ENCODE measurements at regions of chr22 and their contacts with region 1.

Region 1: GRCh38 chr22:19178656-19179496 is at the start of gene SLC25A1:
- DNase-seq: peak; percentile 39
- ATAC-seq: peak; percentile 88
- H3K4me3 ChIP-seq: peak within 1 kb of the TSS; percentile 76
- H3K27ac ChIP-seq: peak within 1 kb of the TSS; percentile 74
- H3K4me1 ChIP-seq: peaks cover 22% of the 10 kb centered on the region
- H3K27me3 ChIP-seq: peaks cover 0 to 1% of the 10 kb centered on the region in 2 experiments; a peak in 1 of 4 replicates
- CTCF ChIP-seq: no peak
- EP300 ChIP-seq: no peak
- POLR2A ChIP-seq: peak; percentile 59
- RAD21 ChIP-seq: no peak
- polyA plus RNA-seq, gene SLC25A1: 2.3 to 7.8 TPM

Region 2: GRCh38 chr22:19043121-19044055 is 135.5 kb before region 1 on chr22:
- CTCF ChIA-PET with region 1: no interaction called
- POLR2A ChIA-PET with region 1: no interaction called
- RAD21 ChIA-PET with region 1: no interaction called
- SMC1A ChIA-PET with region 1: no interaction called
- in situ Hi-C with region 1: no loop called
- intact Hi-C with region 1: no loop called
- DNase-seq: no peak
- ATAC-seq: no peak
- H3K4me3 ChIP-seq: no peak overlapping the region
- H3K27ac ChIP-seq: no peak overlapping the region
- H3K4me1 ChIP-seq: no peaks in the 10 kb centered on the region
- H3K27me3 ChIP-seq: no peaks in the 10 kb centered on the region
- CTCF ChIP-seq: no peak
- EP300 ChIP-seq: no peak
- POLR2A ChIP-seq: no peak
- RAD21 ChIP-seq: no peak

Region 3: GRCh38 chr22:19115628-19116027 is 63.2 kb before region 1 on chr22:
- CTCF ChIA-PET with region 1: interaction called, 11 read pairs
- POLR2A ChIA-PET with region 1: interaction called, 3 read pairs
- RAD21 ChIA-PET with region 1: interaction called, 4 read pairs
- SMC1A ChIA-PET with region 1: interaction called, 3 read pairs
- in situ Hi-C with region 1: no loop called
- intact Hi-C with region 1: no loop called
- DNase-seq: no peak
- ATAC-seq: peak; percentile 75
- H3K4me3 ChIP-seq: no peak overlapping the region
- H3K27ac ChIP-seq: no peak overlapping the region
- H3K4me1 ChIP-seq: peaks cover 24% of the 10 kb centered on the region
- H3K27me3 ChIP-seq: no peaks in the 10 kb centered on the region
- CTCF ChIP-seq: peak; percentile 36 to 50 (median 46); a peak in 5 of 6 replicates
- EP300 ChIP-seq: no peak
- POLR2A ChIP-seq: no peak
- RAD21 ChIP-seq: no peak; the same call in 1 of the 2 replicates

Region 4: GRCh38 chr22:19291580-19292457 is 112.9 kb after region 1 on chr22 and contains the start of gene CLTCL1:
- CTCF ChIA-PET with region 1: interaction called, 10 read pairs
- POLR2A ChIA-PET with region 1: interaction called, 3 read pairs
- RAD21 ChIA-PET with region 1: interaction called, 3 read pairs
- SMC1A ChIA-PET with region 1: interaction called, 3 read pairs
- in situ Hi-C with region 1: loop called (anchors 5 kb)
- intact Hi-C with region 1: no loop called
- DNase-seq: peak; percentile 21
- ATAC-seq: peak; percentile 82
- H3K4me3 ChIP-seq: peak within 1 kb of the TSS; percentile 96
- H3K27ac ChIP-seq: peak within 1 kb of the TSS; percentile 34; the same call in 1 of the 2 replicates
- H3K4me1 ChIP-seq: peaks cover 9% of the 10 kb centered on the region
- H3K27me3 ChIP-seq: peaks cover 7 to 15% of the 10 kb centered on the region in 2 experiments
- CTCF ChIP-seq: no peak
- EP300 ChIP-seq: no peak
- POLR2A ChIP-seq: peak; percentile 58
- RAD21 ChIP-seq: no peak
- polyA plus RNA-seq, gene CLTCL1: 0.04 TPM in 1 of 2 experiments, not detected in the other

Region 5: GRCh38 chr22:19447388-19448075 is 268.7 kb after region 1 on chr22 and contains the start of gene C22orf39:
- CTCF ChIA-PET with region 1: interaction called, 7 read pairs
- POLR2A ChIA-PET with region 1: interaction called, 4 read pairs
- RAD21 ChIA-PET with region 1: interaction called, 4 read pairs
- SMC1A ChIA-PET with region 1: no interaction called
- in situ Hi-C with region 1: no loop called
- intact Hi-C with region 1: loop called (anchors 5 kb)
- DNase-seq: peak; percentile 67
- ATAC-seq: peak; percentile 92
- H3K4me3 ChIP-seq: peak within 1 kb of the TSS; percentile 95
- H3K27ac ChIP-seq: peak within 1 kb of the TSS; percentile 85
- H3K4me1 ChIP-seq: peaks cover 17% of the 10 kb centered on the region
- H3K27me3 ChIP-seq: no peaks in the 10 kb centered on the region
- CTCF ChIP-seq: no peak
- EP300 ChIP-seq: no peak
- POLR2A ChIP-seq: peak; percentile 92
- RAD21 ChIP-seq: no peak
- polyA plus RNA-seq, gene C22orf39: 6.7 to 10.9 TPM

Region 6: DNA sequence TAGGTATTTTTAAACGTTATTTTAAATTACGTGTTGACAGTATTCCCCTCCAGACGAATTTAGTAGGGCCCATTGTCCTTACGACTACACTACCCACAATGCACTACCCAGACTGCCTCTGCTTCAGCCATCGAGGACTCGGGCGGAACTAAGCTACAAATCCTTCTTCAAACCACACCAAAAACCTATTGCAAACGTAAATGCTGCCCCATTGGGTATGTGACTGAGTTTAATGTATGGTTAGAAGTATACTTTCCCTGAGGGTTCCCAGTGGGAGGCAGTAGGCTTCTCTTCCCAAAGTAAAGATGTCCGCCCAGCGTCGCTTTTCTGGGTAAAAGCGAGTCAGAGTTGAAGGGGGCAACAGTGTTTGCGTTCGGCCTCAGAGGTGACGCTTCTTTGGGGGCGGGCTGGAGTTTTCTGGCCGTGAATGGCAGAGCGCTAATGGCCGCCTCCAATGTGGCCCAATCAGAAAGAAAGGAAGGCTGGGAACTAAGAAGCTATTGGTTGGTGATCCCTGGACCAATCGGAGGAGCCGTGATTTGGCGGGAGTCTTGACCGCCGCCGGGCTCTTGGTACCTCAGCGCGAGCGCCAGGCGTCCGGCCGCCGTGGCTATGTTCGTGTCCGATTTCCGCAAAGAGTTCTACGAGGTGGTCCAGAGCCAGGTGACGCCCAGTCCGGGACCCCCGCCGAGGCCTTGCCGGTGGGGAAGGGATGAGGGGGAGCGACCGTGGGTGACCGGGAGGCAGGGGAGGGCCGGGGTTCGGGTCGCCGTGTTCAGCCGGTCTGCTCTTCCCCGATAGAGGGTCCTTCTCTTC is 300.7 kb after region 1 on chr22 and contains the start of gene CDC45:
- CTCF ChIA-PET with region 1: interaction called, 36 read pairs
- POLR2A ChIA-PET with region 1: interaction called, 3 read pairs
- RAD21 ChIA-PET with region 1: interaction called, 21 read pairs
- SMC1A ChIA-PET with region 1: interaction called, 19 read pairs
- in situ Hi-C with region 1: no loop called
- intact Hi-C with region 1: no loop called
- DNase-seq: peak; percentile 93
- ATAC-seq: peak; percentile 95
- H3K4me3 ChIP-seq: peak within 1 kb of the TSS; percentile 97
- H3K27ac ChIP-seq: peak within 1 kb of the TSS; percentile 97
- H3K4me1 ChIP-seq: no peaks in the 10 kb centered on the region
- H3K27me3 ChIP-seq: no peaks in the 10 kb centered on the region
- CTCF ChIP-seq: no peak
- EP300 ChIP-seq: no peak
- POLR2A ChIP-seq: peak; percentile 80
- RAD21 ChIP-seq: no peak
- polyA plus RNA-seq, gene CDC45: 42.8 to 51.2 TPM

Measured in GM12878 (cell line).